ENCODE measurements at regions of chr12 and their contacts with region 1.

Region 1: GRCh38 chr12:51196547-51196946 is 21.3 kb downstream of the POU6F1 start:
- DNase-seq: no peak
- ATAC-seq: no peak
- H3K4me3 ChIP-seq: no peak overlapping the region
- H3K27ac ChIP-seq: no peak overlapping the region
- H3K4me1 ChIP-seq: no peaks in the 10 kb centered on the region
- CTCF ChIP-seq: no peak
- EP300 ChIP-seq: no peak
- POLR2A ChIP-seq: no peak
- RAD21 ChIP-seq: no peak

Region 2: DNA sequence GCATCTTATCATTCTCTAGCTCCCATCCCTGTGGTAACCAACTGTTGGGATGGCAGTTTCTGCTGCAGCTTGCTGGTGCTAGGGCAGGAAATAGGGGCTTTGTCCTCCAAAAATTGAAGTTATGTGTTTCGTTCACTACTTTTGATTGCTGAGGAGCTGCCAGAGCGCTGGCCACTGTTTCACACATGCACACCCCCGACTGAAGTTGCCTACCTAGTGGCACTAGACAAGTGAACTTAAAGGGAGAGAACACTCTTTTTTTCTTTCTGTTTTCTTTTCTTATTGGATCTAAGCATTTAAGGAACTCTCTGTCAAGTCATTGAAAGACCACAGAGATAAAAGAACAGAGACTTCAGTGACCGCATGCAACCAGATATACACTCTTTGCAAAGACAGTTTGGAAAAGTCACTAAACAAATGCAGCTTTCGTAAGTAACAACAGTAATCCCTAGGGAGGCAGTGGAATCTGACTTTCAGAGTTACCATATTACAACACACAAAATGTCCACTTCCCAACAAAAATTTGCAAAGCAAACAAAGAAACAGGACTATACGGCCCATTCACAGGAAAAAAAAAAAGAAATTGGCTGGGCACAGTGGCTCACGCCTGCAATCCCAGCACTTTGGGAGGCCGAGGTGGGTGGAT is 35.6 kb before region 1 on chr12:
- CTCF ChIA-PET with region 1: no interaction called
- POLR2A ChIA-PET with region 1: no interaction called
- DNase-seq: peak in 1 of 2 experiments; percentile 17
- ATAC-seq: peak in 1 of 2 experiments; percentile 49; a peak in 3 of 6 replicates
- H3K4me3 ChIP-seq: no peak overlapping the region
- H3K27ac ChIP-seq: no peak overlapping the region
- H3K4me1 ChIP-seq: peaks cover 12% of the 10 kb centered on the region; the same call in 2 of the 3 replicates
- CTCF ChIP-seq: no peak
- EP300 ChIP-seq: no peak
- POLR2A ChIP-seq: no peak
- RAD21 ChIP-seq: no peak

Region 3: GRCh38 chr12:51210690-51211395 is 14.3 kb after region 1 on chr12:
- CTCF ChIA-PET with region 1: interaction called, 11 read pairs
- POLR2A ChIA-PET with region 1: no interaction called
- DNase-seq: no peak
- ATAC-seq: peak; percentile 53 to 64; a peak in 4 of 6 replicates
- H3K4me3 ChIP-seq: no peak overlapping the region
- H3K27ac ChIP-seq: no peak overlapping the region
- H3K4me1 ChIP-seq: no peaks in the 10 kb centered on the region
- CTCF ChIP-seq: no peak
- EP300 ChIP-seq: no peak
- POLR2A ChIP-seq: no peak
- RAD21 ChIP-seq: no peak

Region 4: DNA sequence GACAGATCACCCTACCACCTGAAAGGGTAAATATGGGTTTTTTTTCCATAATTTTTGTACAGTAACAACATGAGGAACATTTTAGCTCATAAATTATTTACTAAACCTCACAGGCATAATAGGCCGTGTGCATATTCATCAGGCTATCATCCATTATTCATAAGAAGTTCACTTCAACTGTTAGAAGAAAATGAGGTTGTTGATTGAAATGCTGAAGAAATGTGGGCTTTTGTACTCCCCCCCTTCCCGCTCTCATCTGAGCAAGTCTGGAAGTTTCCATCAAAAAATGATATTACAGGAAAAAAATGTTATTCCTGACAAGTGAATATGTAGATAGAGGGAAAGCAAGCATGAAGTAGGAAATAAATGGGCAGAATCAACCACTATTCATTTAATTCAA is 29.2 kb after region 1 on chr12:
- CTCF ChIA-PET with region 1: no interaction called
- POLR2A ChIA-PET with region 1: no interaction called
- DNase-seq: no peak
- ATAC-seq: no peak
- H3K4me3 ChIP-seq: no peak overlapping the region
- H3K27ac ChIP-seq: no peak overlapping the region
- H3K4me1 ChIP-seq: peaks cover 9% of the 10 kb centered on the region; the same call in 2 of the 3 replicates
- CTCF ChIP-seq: no peak
- EP300 ChIP-seq: no peak
- POLR2A ChIP-seq: no peak
- RAD21 ChIP-seq: no peak